PC-9 (cell line): ENCODE measurements at regions of chr4 and their contacts with region 1.

Region 1: DNA sequence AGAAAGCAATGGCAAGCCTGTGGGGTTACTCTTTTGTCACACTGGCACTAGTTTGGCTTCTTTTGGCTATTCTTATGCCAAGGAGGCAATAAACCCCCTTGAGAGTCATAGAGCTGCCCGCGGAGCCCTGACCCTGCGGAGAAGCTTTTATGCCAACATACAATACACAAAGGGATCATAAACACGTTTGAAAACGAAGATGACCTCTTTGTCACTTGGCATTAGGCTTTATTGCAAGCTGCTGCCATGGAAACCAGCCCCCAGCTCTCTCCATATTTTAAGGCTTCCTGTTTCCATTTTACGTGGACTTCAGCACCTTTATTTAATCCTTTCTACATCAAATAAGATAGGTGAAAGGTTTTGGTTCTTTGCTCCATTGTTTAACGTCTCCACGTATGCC is 7.6 kb downstream of the NEUROG2 start:
- DNase-seq: no peak
- H3K4me3 ChIP-seq: no peak overlapping the region
- H3K27ac ChIP-seq: no peak overlapping the region
- H3K4me1 ChIP-seq: no peaks in the 10 kb centered on the region
- H3K27me3 ChIP-seq: peaks cover 10% of the 10 kb centered on the region; the same call in 1 of the 2 replicates
- CTCF ChIP-seq: no peak

Region 2: DNA sequence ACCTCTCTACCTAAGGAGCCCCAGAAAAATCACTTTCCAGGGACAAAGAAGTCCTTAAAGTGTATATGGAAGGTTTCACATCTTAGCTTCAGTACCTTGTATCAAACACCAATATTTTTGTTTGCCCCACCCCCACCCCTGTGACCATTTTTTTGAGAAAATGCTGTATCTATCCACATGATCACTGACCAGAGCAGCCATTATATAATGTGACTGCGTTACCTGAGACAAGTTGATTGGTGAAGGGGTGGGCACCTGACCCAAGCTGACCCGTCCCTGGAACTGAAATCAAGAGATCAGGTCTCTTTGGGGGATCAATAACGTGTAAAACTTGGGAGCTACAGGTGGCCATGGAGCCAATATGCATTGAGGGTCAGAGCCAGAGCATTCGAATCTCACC is 233.4 kb before region 1 on chr4:
- CTCF ChIA-PET with region 1: no interaction called
- POLR2A ChIA-PET with region 1: interaction called, 15 read pairs
- intact Hi-C with region 1: no loop called
- DNase-seq: no peak
- H3K4me3 ChIP-seq: no peak overlapping the region
- H3K27ac ChIP-seq: no peak overlapping the region
- H3K4me1 ChIP-seq: peaks cover 12% of the 10 kb centered on the region; the same call in 1 of the 2 replicates
- H3K27me3 ChIP-seq: no peaks in the 10 kb centered on the region
- CTCF ChIP-seq: no peak